Mammary epithelial cell (primary cell): ENCODE measurements at regions of chr2 and their contacts with region 1.

Region 1: GRCh38 chr2:99559075-99559662 is 69.4 kb upstream of the REV1 start:
- DNase-seq: peak; percentile 50
- H3K4me3 ChIP-seq: no peak overlapping the region
- H3K27ac ChIP-seq: no peak overlapping the region
- H3K4me1 ChIP-seq: no peaks in the 10 kb centered on the region
- H3K27me3 ChIP-seq: peaks cover 4% of the 10 kb centered on the region
- CTCF ChIP-seq: peak; percentile 97 to 98

Region 2: DNA sequence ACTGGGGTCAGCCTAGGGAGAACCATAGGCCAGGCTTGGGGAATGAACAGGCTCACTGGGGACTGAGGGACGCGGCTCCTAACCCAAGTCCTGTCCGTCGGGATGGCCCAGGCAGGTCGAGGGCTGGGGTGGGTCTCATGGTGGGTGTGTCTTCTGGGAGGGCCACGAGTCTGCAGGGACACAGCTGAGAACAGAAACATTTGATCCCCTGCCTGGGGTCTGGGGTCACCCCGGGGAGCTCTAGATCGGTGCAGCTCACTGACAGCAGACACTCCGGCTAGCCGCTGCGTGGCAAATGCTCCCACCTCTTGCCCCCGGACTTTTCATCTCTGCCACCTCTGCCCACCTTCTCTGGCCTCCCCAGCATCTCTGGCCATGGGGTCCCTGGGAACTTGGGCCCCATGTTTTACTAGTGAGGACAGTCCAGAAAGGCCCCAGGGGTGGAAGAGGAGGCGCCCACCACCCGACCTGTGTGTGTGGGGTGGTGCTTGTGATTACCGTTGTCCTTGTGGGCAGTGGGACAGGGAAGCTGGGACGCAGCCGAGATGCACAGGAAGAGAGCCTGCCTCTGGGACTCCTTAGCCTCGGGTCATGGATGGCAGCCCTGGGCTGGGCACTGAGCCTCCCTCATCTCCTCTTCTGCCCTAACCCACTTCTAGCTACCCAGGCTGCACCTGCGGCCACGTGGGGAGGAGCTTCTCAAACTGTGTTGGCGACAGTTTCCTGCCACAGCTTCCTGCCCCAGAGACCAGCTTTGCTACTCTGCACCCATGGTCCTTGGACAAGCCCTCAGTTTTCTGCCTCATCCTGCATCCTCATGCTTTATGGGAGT is 1840.9 kb before region 1 on chr2:
- CTCF ChIA-PET with region 1: no interaction called
- dilution Hi-C with region 1: no loop called
- in situ Hi-C with region 1: no loop called
- intact Hi-C with region 1: no loop called
- DNase-seq: no peak
- H3K4me3 ChIP-seq: no peak overlapping the region
- H3K27ac ChIP-seq: no peak overlapping the region
- H3K4me1 ChIP-seq: no peaks in the 10 kb centered on the region
- H3K27me3 ChIP-seq: no peaks in the 10 kb centered on the region
- CTCF ChIP-seq: no peak

Region 3: DNA sequence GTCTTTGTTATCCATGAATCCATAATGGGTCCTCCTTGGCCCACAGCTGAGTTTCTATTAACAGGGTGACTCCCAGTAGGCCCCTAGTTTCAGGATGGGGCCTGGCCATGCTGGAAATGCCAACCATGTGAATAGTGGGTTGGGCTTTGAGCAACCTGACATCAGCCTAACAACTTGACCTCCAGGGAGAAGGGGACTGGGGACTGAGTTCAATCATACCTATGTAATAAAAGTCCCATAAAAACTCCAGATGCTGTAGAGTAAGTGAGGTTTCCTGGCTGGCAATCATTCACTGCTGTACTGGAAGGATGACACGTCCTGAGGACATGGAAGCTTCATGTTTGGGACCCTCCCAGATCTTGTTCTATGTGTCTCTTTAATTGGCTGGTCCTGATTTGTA is 77.2 kb before region 1 on chr2:
- CTCF ChIA-PET with region 1: no interaction called
- dilution Hi-C with region 1: no loop called
- in situ Hi-C with region 1: no loop called
- intact Hi-C with region 1: no loop called
- DNase-seq: peak; percentile 30
- H3K4me3 ChIP-seq: no peak overlapping the region
- H3K27ac ChIP-seq: peak overlapping the region; percentile 90
- H3K4me1 ChIP-seq: peaks cover 48% of the 10 kb centered on the region
- H3K27me3 ChIP-seq: no peaks in the 10 kb centered on the region
- CTCF ChIP-seq: no peak

Region 4: DNA sequence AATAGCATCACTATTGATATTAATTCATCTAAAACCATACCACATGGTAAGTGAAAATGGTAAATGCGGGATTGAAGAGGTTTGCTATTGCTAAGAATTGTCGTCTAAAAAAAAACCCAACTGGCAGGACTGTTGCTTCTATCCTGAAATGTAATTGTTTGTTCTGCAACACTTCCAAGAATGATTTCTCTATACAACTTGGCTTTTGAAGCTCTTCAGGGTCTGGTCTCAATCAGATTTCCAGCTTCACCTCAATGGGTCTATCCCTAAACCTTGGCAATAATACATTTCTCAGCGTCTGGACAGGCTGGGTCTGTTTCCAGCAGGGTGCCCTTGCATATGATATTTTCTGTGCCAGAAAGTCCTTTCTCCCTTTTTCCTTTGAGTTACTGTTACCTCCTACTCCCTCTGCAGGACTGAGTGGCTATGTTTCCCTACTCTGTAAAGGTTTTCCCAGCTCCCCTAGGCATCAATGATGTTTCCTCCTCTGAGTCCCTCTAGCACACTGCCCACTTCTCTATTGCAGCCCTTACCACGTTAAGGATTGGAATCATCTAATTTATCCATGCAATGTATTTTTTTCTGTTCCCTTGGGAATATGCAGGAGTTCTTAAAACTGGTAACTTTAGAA is 48.8 kb after region 1 on chr2:
- CTCF ChIA-PET with region 1: no interaction called
- dilution Hi-C with region 1: no loop called
- in situ Hi-C with region 1: no loop called
- intact Hi-C with region 1: no loop called
- DNase-seq: no peak
- H3K4me3 ChIP-seq: no peak overlapping the region
- H3K27ac ChIP-seq: no peak overlapping the region
- H3K4me1 ChIP-seq: no peaks in the 10 kb centered on the region
- H3K27me3 ChIP-seq: peaks cover 5% of the 10 kb centered on the region
- CTCF ChIP-seq: peak in 1 of 2 donors; percentile 4

Region 5: DNA sequence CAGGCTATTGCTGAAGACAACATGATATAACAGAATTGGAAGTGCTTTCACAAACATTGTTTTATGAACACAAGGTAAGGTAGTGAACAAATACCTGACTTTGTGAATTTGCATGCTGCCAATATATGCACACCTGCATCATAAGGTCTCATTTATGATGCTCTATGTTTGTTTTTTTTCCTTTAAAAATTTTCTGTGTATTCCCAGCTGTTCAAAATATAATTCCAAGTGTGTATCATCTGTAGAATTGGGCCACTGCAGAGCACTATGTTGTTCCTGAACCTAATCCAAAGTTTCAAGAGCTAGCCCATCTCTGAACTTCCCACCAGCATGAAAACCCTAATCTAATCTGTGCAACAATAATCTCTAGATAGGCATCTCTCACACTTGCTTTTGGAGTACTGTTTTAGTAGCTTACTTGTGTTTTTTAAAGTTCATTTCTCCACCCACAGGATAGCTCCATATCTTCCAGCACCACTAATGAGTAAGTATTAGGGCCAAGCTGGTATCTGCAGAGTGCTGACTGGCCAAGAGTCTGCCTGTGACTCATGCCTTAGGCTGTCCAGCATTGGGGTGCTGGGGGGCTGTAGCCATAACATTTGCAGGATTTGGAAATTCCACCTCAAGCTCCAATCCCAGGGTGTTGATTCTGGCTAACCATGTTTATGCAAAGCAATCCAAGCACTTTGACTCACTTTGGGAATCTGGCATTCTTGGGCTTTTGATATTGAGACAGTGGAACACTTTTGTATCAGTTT is 138.8 kb after region 1 on chr2:
- CTCF ChIA-PET with region 1: interaction called, 5 read pairs
- dilution Hi-C with region 1: no loop called
- in situ Hi-C with region 1: no loop called
- intact Hi-C with region 1: loop called (anchors 10 kb)
- DNase-seq: peak; percentile 45
- H3K4me3 ChIP-seq: no peak overlapping the region
- H3K27ac ChIP-seq: no peak overlapping the region
- H3K4me1 ChIP-seq: peaks cover 18% of the 10 kb centered on the region
- H3K27me3 ChIP-seq: peaks cover 2% of the 10 kb centered on the region
- CTCF ChIP-seq: no peak

Region 6: DNA sequence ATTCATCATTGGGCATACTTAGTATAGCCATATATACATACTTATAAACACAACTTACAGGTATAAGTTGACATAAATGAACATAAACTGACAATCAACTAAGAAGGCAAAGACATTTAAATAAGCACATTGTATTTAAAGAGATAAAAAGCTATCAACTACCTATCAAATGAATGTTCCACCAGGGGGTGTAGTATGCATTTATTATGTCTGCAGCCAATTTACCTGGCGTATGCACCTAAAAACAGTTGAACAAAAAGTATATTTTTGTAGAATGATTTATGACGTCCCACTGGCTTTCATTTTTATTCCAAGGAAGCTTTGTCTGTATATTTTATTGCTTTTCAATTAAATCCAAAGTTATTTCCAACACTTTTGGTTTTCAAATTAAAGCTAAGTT is 259.7 kb after region 1 on chr2:
- CTCF ChIA-PET with region 1: no interaction called
- dilution Hi-C with region 1: no loop called
- in situ Hi-C with region 1: loop called in 1 of 2 experiments (anchors 25 kb)
- intact Hi-C with region 1: loop called (anchors 1 kb)
- DNase-seq: peak; percentile 24
- H3K4me3 ChIP-seq: no peak overlapping the region
- H3K27ac ChIP-seq: no peak overlapping the region
- H3K4me1 ChIP-seq: no peaks in the 10 kb centered on the region
- H3K27me3 ChIP-seq: no peaks in the 10 kb centered on the region
- CTCF ChIP-seq: peak; percentile 21 to 51

Region 7: DNA sequence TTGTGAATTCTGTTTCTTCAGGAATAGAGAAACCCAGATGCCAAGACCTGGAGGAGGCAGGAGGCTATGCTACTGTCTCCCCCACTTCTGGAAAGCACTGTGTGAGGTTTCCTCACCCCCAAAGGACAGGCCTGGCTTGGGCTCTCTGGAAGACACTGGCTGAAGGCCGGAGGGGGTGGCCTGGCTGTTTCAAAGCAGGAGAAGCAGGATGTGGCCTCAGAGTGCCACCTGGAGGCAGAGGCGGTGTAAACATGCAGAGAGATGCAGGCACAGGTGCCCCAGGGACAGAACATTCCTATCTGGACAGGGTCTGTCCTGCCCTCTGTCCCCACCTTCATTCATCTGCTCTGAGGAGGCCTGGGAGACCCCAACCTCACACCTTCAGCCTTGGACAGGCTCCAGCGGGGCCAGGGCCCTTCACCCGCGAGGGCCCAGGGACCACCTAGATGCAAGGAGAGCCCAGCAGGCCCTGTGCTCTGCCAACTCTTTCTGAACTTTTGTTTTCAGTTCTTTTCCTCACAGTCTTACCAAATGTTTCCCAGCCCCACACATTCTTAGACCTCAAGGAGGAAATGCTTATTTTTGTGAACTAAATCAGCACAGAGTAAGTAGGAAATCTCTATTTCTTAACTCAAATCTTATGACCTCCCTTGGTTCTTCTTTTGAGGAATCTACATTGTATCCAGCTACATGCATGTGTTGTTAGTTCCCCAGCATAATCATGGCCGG is 683.9 kb after region 1 on chr2:
- CTCF ChIA-PET with region 1: no interaction called
- dilution Hi-C with region 1: no loop called
- in situ Hi-C with region 1: loop called in 1 of 2 experiments (anchors 25 kb)
- intact Hi-C with region 1: loop called (anchors 1 kb)
- DNase-seq: peak; percentile 15
- H3K4me3 ChIP-seq: no peak overlapping the region
- H3K27ac ChIP-seq: no peak overlapping the region
- H3K4me1 ChIP-seq: no peaks in the 10 kb centered on the region
- H3K27me3 ChIP-seq: no peaks in the 10 kb centered on the region
- CTCF ChIP-seq: peak; percentile 65 to 87

Region 8: DNA sequence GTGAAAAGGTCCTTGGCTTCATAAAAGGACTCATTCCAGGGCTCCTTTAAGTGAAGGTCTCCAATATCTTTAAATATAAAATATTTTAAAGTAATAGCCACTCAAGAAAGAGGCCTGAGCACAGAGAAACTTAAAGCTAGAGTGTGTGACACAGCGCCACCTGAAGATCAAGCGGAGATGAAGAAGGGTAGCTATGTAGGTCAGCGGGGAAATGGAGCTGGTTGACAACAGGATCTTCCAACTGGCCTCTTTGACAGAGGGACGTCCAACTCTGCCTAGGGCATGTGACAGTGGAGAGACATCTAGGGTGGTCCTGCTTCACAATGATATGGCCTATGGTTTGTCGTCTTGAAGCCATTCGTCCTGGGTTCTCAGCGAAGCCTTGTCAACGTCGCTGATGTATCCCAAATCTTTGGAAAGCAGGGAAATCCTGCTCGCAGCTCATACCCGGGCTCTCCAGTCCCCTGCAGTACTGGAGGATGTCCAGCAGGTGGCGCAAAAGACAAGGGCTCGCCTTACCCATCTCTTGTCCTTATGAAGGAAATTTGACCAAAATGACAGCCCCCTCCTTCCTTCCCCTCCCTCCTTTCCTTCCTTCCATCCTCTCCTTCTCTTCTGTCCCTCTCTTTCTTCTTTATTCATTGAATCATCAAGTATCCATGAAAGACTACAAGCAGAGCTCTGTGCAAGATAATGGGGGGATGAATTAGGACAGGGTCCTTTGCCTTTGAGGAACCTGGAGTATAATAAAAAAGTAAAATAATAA is 703.6 kb after region 1 on chr2:
- CTCF ChIA-PET with region 1: no interaction called
- dilution Hi-C with region 1: no loop called
- in situ Hi-C with region 1: loop called in 1 of 2 experiments (anchors 10 kb)
- intact Hi-C with region 1: loop called (anchors 1 kb)
- DNase-seq: peak; percentile 18
- H3K4me3 ChIP-seq: no peak overlapping the region
- H3K27ac ChIP-seq: no peak overlapping the region
- H3K4me1 ChIP-seq: no peaks in the 10 kb centered on the region
- H3K27me3 ChIP-seq: no peaks in the 10 kb centered on the region
- CTCF ChIP-seq: peak; percentile 90 to 96

Region 9: DNA sequence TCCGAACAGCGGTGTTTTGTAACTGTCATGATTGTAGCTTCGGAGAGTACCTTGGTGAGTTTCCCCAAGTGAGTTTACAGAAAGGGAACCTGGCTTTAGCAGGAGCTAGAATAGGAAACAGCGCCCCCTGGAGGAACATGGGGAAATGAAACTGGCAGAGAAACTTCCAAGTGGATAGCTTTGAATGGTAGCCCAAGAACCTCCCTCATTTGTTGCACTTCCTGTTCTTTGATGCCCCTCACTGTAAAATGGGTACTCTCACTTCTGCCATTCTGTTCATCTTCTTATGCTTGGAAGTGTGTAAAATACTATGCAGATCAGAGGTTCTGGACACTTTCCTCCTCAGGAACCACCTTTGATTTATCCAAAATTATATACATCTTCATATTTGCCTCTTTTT is 822.1 kb after region 1 on chr2:
- CTCF ChIA-PET with region 1: no interaction called
- dilution Hi-C with region 1: no loop called
- in situ Hi-C with region 1: loop called in 1 of 2 experiments (anchors 25 kb)
- intact Hi-C with region 1: loop called (anchors 5 kb)
- DNase-seq: peak; percentile 57
- H3K4me3 ChIP-seq: no peak overlapping the region
- H3K27ac ChIP-seq: no peak overlapping the region
- H3K4me1 ChIP-seq: no peaks in the 10 kb centered on the region
- H3K27me3 ChIP-seq: no peaks in the 10 kb centered on the region
- CTCF ChIP-seq: peak; percentile 92 to 93

Region 10: DNA sequence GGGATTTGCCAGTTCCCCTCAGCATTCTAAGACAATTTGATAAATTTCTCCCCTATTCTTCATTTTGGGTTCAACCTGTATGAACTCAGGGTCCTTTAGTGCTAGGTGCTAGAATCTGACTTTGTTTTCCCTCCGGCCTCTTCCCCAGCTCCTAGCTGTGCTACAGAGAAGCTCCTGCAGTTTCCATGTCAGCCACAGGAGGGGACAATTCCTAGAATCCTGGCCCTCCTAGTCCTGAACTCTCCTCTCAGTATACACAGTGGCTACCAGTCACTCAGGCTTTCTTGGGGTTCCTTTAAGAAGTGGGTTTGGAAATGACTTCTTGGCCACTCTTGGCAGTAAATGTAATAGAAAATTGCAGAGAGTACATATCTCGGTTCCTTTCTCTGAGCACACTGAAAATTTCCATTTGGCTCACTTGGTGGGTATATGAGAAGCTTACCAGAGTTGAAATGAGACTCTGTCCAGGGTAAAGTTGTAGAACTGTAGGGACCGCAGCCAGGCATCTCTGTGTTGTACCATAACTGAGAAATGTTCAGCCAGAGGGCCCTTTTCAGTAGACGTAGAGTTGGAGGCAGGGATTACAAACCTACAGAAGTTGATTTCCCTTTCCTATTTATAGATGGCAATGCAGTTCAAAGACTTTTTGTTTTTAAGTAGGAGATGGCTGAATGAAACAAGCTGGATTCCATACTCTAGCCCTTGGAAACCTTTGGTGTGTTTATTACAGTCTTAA is 863.3 kb after region 1 on chr2:
- CTCF ChIA-PET with region 1: interaction called, 16 read pairs
- dilution Hi-C with region 1: no loop called
- in situ Hi-C with region 1: no loop called
- intact Hi-C with region 1: no loop called
- DNase-seq: peak; percentile 11
- H3K4me3 ChIP-seq: no peak overlapping the region
- H3K27ac ChIP-seq: no peak overlapping the region
- H3K4me1 ChIP-seq: peaks cover 3% of the 10 kb centered on the region
- H3K27me3 ChIP-seq: peaks cover 3% of the 10 kb centered on the region
- CTCF ChIP-seq: peak; percentile 57 to 67